Endothelial cell of umbilical vein (primary cell): ENCODE measurements at regions of chr18 and their contacts with region 1.

Region 1: DNA sequence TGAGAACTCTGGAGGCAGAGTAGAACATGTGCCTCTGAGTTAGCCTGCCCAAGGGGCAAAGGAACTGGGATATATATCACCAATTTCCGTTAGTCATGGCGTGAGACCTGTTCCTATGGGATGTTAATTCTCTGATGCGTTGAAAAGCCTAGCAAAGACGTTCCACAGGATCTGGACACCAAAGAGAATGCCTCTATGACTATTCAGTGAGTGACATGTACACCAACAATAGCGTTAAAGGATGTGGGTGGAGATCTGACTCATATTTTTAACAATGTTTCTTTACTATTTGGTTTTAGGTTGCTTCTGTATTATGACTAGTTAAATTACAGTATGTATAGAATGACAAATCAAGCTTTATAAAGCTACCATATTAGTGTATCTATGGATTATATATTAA is 320.9 kb upstream of the MC4R start:
- DNase-seq: peak; percentile 65
- H3K4me3 ChIP-seq: no peak overlapping the region
- H3K27ac ChIP-seq: peak overlapping the region; percentile 44
- H3K4me1 ChIP-seq: peaks cover 9% of the 10 kb centered on the region
- H3K27me3 ChIP-seq: no peaks in the 10 kb centered on the region
- CTCF ChIP-seq: no peak
- POLR2A ChIP-seq: no peak

Region 2: GRCh38 chr18:60754413-60755009 is 61.1 kb after region 1 on chr18:
- CTCF ChIA-PET with region 1: no interaction called
- POLR2A ChIA-PET with region 1: no interaction called
- dilution Hi-C with region 1: no loop called
- intact Hi-C with region 1: loop called (anchors 1 kb)
- DNase-seq: peak; percentile 87
- H3K4me3 ChIP-seq: peak overlapping the region in 1 of 3 experiments; percentile 23
- H3K27ac ChIP-seq: peak overlapping the region; percentile 55
- H3K4me1 ChIP-seq: peaks cover 23% of the 10 kb centered on the region
- H3K27me3 ChIP-seq: no peaks in the 10 kb centered on the region
- CTCF ChIP-seq: no peak
- POLR2A ChIP-seq: no peak

Region 3: GRCh38 chr18:61123309-61123708 is 429.9 kb after region 1 on chr18:
- CTCF ChIA-PET with region 1: no interaction called
- POLR2A ChIA-PET with region 1: no interaction called
- dilution Hi-C with region 1: no loop called
- intact Hi-C with region 1: no loop called
- DNase-seq: no peak
- H3K4me3 ChIP-seq: no peak overlapping the region
- H3K27ac ChIP-seq: no peak overlapping the region
- H3K4me1 ChIP-seq: no peaks in the 10 kb centered on the region
- H3K27me3 ChIP-seq: peaks cover 0 to 5% of the 10 kb centered on the region in 2 experiments
- CTCF ChIP-seq: no peak
- POLR2A ChIP-seq: no peak